HepG2 (cell line): ENCODE measurements at regions of chr13 and their contacts with region 1.

Region 1: DNA sequence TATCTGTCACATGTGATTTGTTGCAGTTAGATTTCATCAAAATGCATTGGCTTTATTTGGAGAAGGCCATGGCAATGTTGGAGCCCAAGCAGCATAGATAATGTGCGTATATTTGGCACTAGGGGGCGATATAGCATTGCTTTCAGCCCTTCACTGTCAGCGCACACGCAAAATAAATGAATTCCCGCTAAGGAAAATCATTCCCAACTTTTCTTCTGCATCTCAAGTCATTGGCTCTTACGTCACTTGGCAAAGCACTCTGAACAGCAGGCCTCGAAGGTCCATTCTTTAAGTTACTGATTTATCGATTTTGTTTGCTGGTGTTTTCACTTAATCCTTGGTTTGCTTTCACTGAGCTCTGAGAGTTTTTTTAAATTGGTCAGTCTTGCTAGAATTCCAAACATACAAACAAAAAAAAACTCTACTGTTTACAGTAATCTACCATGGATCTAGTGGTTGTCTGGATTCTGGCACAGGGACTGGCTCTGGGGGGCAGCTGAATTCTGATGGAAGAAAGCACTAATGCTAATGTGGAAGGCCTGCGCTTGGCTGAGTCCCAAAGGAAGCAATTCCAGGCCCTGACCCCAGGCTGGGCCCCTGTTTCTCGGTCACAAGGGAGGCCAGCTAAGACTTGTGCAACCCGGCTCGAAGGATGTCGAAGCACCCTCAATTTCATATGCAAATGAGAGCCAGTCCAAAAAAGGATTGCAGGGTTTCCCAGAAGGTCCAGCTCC is 97.7 kb upstream of the IPO5 start:
- DNase-seq: peak; percentile 55
- ATAC-seq: peak; percentile 94
- H3K4me3 ChIP-seq: peak overlapping the region in 2 of 3 experiments; percentile 39 to 58; a peak in 3 of 6 replicates
- H3K27ac ChIP-seq: no peak overlapping the region
- H3K4me1 ChIP-seq: peaks cover 22% of the 10 kb centered on the region
- H3K27me3 ChIP-seq: peaks cover 0 to 24% of the 10 kb centered on the region in 2 experiments; a peak in 3 of 5 replicates
- CTCF ChIP-seq: peak; percentile 88
- EP300 ChIP-seq: no peak
- POLR2A ChIP-seq: no peak
- RAD21 ChIP-seq: peak; percentile 83

Region 2: GRCh38 chr13:97953376-97953970 is 97.7 kb after region 1 on chr13 and contains the start of gene IPO5:
- CTCF ChIA-PET with region 1: no interaction called
- POLR2A ChIA-PET with region 1: no interaction called
- in situ Hi-C with region 1: no loop called
- intact Hi-C with region 1: no loop called
- DNase-seq: no peak
- ATAC-seq: no peak
- H3K4me3 ChIP-seq: no peak within 1 kb of the TSS
- H3K27ac ChIP-seq: no peak within 1 kb of the TSS
- H3K4me1 ChIP-seq: no peaks in the 10 kb centered on the region
- H3K27me3 ChIP-seq: peaks cover 2 to 19% of the 10 kb centered on the region in 2 experiments; a peak in 4 of 5 replicates
- CTCF ChIP-seq: no peak
- EP300 ChIP-seq: no peak
- POLR2A ChIP-seq: no peak
- RAD21 ChIP-seq: no peak
- total RNA-seq, gene IPO5: 242 and 411 TPM in 2 replicates

Region 3: GRCh38 chr13:97975848-97976609 is 120.3 kb after region 1 on chr13:
- CTCF ChIA-PET with region 1: no interaction called
- POLR2A ChIA-PET with region 1: no interaction called
- in situ Hi-C with region 1: no loop called
- intact Hi-C with region 1: loop called (anchors 5 kb)
- DNase-seq: peak; percentile 86
- ATAC-seq: peak; percentile 95
- H3K4me3 ChIP-seq: peak overlapping the region; percentile 73 to 97 (median 83)
- H3K27ac ChIP-seq: peak overlapping the region; percentile 94
- H3K4me1 ChIP-seq: peaks cover 42% of the 10 kb centered on the region
- H3K27me3 ChIP-seq: no peaks in the 10 kb centered on the region; a peak in 1 of 5 replicates
- CTCF ChIP-seq: no peak
- EP300 ChIP-seq: peak in 1 of 2 experiments; percentile 51; a peak in 2 of 4 replicates
- POLR2A ChIP-seq: peak; percentile 66 to 79; a peak in 3 of 4 replicates
- RAD21 ChIP-seq: peak; percentile 26; the same call in 1 of the 2 replicates

Region 4: DNA sequence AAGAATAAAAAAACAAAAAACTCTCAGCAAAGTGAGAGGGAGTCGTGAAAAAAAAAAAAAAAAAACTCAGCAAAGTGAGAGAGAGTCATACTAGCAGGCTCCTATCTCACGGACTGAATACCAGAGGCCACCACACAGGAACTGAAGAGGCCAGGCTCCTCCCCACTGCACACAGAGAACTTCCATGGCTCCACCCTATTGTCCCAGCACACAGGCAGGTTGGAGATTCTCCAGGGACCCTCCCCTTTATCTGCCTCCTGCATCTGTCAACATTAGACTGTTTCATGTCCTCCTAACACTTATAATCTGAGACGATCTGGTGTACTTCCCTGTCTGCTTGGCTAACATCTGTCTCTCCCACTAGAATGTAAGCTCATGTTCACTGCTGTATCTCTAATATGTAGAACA is 250.2 kb after region 1 on chr13:
- CTCF ChIA-PET with region 1: no interaction called
- POLR2A ChIA-PET with region 1: no interaction called
- in situ Hi-C with region 1: no loop called
- intact Hi-C with region 1: loop called (anchors 10 kb)
- DNase-seq: peak; percentile 90
- ATAC-seq: peak; percentile 99
- H3K4me3 ChIP-seq: peak overlapping the region in 1 of 3 experiments; percentile 9; a peak in 2 of 6 replicates
- H3K27ac ChIP-seq: peak overlapping the region; percentile 33
- H3K4me1 ChIP-seq: peaks cover 71% of the 10 kb centered on the region
- H3K27me3 ChIP-seq: no peaks in the 10 kb centered on the region
- CTCF ChIP-seq: no peak
- EP300 ChIP-seq: peak in 1 of 2 experiments; percentile 39; a peak in 1 of 4 replicates
- POLR2A ChIP-seq: peak in 1 of 2 experiments; percentile 55; a peak in 2 of 4 replicates
- RAD21 ChIP-seq: no peak

Region 5: GRCh38 chr13:98445340-98446233 is 589.9 kb after region 1 on chr13:
- CTCF ChIA-PET with region 1: no interaction called
- POLR2A ChIA-PET with region 1: no interaction called
- in situ Hi-C with region 1: loop called (anchors 25 kb)
- intact Hi-C with region 1: loop called (anchors 5 kb)
- DNase-seq: peak; percentile 42
- ATAC-seq: peak; percentile 76
- H3K4me3 ChIP-seq: no peak overlapping the region
- H3K27ac ChIP-seq: no peak overlapping the region
- H3K4me1 ChIP-seq: peaks cover 12% of the 10 kb centered on the region
- H3K27me3 ChIP-seq: no peaks in the 10 kb centered on the region
- CTCF ChIP-seq: peak; percentile 97
- EP300 ChIP-seq: no peak
- POLR2A ChIP-seq: peak in 1 of 2 experiments; percentile 36; a peak in 1 of 4 replicates
- RAD21 ChIP-seq: peak; percentile 79